GM18951 (cell line): ENCODE measurements at regions of chr6 and their contacts with region 1.

Region 1: DNA sequence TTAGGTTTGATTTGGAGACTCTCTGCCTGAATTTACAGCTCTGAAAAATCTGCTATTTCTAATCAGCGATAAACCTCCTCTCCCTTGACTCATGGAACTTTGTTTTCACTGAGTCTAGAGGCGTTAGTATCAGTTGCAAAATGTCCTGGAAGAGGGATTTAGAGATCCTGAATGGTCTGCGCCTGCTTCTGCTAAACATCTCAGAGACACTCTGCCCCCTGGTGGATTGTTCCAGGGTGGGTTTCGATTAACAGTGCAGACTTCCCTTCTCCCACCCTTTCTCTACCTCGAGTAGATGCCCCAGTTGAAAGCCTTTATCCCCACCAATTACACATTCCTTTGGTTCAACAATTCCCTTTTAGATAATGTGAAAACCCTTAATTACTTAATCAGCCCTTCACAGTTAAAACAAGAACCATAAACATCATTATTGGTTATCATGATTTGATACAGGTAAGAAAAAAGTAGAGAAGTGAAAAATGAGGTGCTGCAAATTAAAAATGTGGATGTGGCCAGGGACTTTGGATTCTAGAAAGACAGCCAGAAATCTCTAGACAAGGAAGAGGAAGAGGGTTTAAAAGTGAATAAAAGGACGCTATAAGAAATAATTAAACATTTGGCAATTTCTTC is 5.5 kb downstream of the HTR1B start:
- POLR2A ChIP-seq: no peak

Region 2: DNA sequence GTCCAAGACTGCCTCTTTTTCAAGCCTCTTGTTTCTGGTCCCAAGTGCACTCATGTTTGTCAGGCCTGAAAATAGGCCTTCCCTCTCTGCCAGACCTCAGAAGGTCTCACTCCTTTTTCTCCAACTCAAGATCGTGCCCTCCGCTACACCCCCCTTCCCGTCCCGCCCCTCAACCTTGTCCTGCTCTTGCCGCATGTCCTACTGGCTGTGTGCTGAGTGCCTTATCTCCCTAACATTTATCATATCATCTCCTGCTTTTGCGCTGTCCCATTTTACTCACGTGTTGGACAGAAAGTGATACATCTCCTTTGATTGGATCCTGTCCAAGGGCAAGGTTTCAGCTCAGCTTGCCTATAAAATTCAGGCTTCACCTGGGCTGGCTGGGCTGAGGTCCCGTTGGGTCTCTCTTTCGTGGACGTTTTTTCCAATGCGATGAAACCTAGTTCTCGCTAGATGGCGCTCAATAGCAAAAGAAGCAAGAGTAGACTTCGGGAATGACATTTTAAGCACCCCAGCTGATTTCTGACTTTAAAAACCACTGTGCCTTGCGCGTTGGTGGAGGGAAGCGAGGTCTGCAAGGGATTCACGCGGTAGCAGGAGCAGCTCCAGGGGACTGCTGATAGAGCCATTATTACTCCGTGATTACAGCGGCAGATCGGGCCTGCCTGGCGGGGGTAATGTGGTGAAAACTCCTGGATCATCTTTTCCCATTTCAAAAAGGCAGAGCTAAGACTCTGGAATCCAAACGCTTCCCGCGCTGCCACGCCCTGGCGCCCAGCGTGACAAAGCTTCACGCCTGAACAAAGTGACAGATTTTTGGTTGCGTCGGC is 1523.0 kb before region 1 on chr6:
- in situ Hi-C with region 1: loop called (anchors 25 kb)
- POLR2A ChIP-seq: no peak

Region 3: GRCh38 chr6:77159730-77160129 is 298.1 kb before region 1 on chr6:
- in situ Hi-C with region 1: no loop called
- POLR2A ChIP-seq: no peak

Region 4: DNA sequence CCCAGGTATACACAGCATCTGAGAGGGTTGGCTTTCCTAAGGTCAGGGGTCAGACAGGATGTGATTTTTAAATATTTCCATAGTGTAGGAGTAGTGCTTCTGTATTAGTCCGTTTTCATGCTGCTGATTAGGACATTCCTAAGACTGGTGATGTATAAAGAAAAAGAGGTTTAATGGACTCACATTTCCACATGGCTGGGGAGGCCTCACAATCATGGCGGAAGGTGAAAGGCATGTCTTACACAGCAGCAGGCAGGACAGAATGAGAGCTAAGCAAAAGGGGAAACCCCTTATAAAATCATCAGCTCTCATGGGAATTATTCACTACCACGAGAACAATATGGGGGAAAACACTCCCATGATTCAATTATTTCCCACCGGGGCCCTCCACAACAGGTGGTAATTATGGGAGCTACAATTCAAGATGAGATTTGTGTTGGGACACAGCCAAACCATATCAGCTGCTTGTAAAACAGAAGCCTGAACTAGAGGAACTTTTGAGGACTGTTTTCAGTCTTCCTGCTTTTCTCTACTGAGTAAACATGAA is 104.0 kb after region 1 on chr6:
- in situ Hi-C with region 1: no loop called
- POLR2A ChIP-seq: no peak

Region 5: GRCh38 chr6:77594285-77594684 is 136.4 kb after region 1 on chr6:
- in situ Hi-C with region 1: no loop called
- POLR2A ChIP-seq: no peak

Region 6: DNA sequence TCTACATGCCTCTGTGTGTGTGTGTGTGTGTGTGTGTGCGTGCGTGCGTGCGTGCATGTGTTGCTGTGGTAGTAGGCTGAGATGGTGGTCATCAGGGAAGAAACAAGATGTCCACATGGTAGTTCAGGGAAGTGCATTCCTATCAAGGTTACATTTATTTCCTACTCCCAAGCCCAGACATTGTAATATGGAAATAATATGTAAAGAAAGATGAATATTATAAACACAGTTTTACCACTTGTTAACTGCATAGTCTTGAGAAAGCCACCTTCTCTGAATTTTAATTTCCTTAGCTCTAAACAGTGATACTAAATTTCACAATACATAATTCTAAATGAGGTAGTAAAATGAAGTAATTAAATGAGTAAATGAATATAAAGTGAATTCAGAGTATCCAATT is 209.0 kb after region 1 on chr6:
- in situ Hi-C with region 1: no loop called
- POLR2A ChIP-seq: no peak